ENCODE measurements at regions of chr14 and their contacts with region 1.

Region 1: GRCh38 chr14:58297762-58298476 is 436 bp upstream of the ARID4A start:
- DNase-seq: peak; percentile 94
- ATAC-seq: peak; percentile 90
- H3K4me3 Mint-ChIP-seq: no peak overlapping the region
- H3K27ac Mint-ChIP-seq: no peak overlapping the region
- H3K4me1 Mint-ChIP-seq: peaks cover 30% of the 10 kb centered on the region
- H3K27me3 Mint-ChIP-seq: no peaks in the 10 kb centered on the region

Region 2: GRCh38 chr14:58239244-58240195 is 58.4 kb before region 1 on chr14:
- POLR2A ChIA-PET with region 1: interaction called, 64 read pairs
- DNase-seq: peak; percentile 77
- ATAC-seq: peak; percentile 28
- H3K4me3 Mint-ChIP-seq: no peak overlapping the region
- H3K27ac Mint-ChIP-seq: no peak overlapping the region
- H3K4me1 Mint-ChIP-seq: peaks cover 15% of the 10 kb centered on the region
- H3K27me3 Mint-ChIP-seq: no peaks in the 10 kb centered on the region

Region 3: DNA sequence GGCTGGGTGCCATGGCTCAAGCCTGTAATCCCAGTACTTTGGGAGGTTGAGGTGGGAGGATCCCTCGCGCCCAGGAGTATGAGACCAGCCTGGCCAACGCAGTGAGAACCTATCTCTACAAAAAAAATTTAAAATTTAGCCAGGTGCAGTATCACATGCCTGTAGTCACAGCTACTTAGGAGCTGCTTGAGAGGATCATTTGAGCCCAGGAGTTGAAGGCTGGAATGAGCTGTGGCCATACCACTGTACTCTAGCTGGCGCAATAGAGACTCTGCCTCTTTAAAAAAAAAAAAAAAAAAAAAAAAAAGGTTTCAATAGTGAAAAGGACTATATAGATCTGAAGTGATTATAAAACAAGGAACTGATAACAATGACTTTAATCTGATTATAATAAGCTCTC is 39.8 kb before region 1 on chr14:
- POLR2A ChIA-PET with region 1: interaction called, 12 read pairs
- DNase-seq: no peak
- ATAC-seq: no peak
- H3K4me3 Mint-ChIP-seq: no peak overlapping the region
- H3K27ac Mint-ChIP-seq: no peak overlapping the region
- H3K4me1 Mint-ChIP-seq: peaks cover 7% of the 10 kb centered on the region
- H3K27me3 Mint-ChIP-seq: no peaks in the 10 kb centered on the region

Region 4: DNA sequence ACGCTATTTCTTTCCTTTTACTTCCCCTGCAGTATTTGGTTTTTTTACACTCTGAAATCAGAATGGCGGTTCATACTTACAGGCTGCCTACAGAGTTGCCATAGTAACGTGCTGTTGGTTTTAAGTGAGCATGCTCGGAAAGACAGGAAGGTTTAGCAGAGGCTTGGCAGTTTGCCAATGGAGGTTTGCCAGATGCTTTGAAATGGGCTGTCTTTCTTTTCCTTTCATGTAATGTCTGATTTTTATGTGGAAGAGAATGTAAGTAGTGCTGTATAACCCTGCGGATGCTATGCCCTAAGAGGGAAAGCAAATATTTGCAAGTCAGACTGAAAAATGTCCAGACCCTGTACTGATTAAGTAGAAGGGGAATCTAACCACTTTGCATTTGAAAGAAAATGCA is 33.2 kb after region 1 on chr14:
- POLR2A ChIA-PET with region 1: interaction called, 11 read pairs
- DNase-seq: peak; percentile 61
- ATAC-seq: peak; percentile 97
- H3K4me3 Mint-ChIP-seq: peak overlapping the region; percentile 76
- H3K27ac Mint-ChIP-seq: peak overlapping the region; percentile 76
- H3K4me1 Mint-ChIP-seq: peaks cover 16% of the 10 kb centered on the region
- H3K27me3 Mint-ChIP-seq: no peaks in the 10 kb centered on the region

Region 5: DNA sequence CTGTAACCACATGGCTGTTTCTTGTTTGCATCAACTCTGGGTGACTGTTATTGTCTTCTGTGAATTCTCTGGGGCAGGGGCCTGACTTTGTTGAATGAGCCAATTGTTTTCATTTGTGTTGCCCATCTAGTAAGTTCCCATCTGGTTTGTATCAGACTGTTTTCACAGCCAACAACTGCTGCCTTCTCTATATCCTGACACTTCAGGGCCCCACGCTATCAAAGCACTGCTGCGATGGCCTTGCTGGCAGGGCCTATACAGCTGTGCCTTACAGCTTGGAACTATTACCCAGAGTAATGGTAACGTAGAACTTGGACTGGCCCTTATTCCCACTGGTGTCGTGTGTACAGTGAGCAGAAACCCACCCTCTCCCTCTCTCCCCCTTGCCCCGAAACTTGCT is 235.5 kb after region 1 on chr14:
- POLR2A ChIA-PET with region 1: no interaction called
- DNase-seq: no peak
- ATAC-seq: no peak
- H3K4me3 Mint-ChIP-seq: no peak overlapping the region
- H3K27ac Mint-ChIP-seq: no peak overlapping the region
- H3K4me1 Mint-ChIP-seq: no peaks in the 10 kb centered on the region
- H3K27me3 Mint-ChIP-seq: no peaks in the 10 kb centered on the region